HEK293 (cell line): ENCODE measurements at regions of chr1 and their contacts with region 1.

Region 1: DNA sequence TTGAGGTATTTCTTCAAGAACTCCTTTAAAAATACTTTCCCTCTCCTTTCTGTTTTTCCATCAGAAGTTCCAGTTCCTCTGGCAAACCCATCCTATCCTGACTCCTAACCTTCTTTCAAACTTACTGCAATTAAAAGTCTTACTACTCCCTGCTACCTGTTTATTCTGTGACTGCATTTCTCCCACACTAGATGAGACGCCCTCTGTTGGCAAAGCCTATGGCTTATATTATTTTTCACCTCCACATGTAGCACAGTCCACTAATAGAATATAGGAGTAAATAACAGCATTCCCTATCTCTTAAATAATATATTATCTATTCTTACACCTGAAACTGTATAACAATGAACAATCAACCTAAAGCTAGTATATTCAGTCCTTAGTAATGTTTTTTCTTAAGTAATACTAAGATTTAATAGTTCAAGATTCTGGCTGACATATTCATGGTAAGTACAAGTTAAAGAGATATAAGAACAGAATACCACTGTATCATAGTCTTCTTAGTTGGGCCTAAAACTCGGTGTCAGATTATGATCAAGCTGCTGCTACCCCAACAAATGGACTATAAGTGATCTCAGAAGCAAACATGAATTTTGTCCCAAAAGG is 54.8 kb downstream of the RAB3GAP2 start:
- H3K4me3 ChIP-seq: no peak overlapping the region
- H3K27ac ChIP-seq: no peak overlapping the region
- H3K4me1 ChIP-seq: peaks cover 9% of the 10 kb centered on the region; the same call in 1 of the 2 replicates
- CTCF ChIP-seq: no peak

Region 2: GRCh38 chr1:220189750-220190347 is 27.6 kb before region 1 on chr1:
- CTCF ChIA-PET with region 1: interaction called, 22 read pairs
- POLR2A ChIA-PET with region 1: interaction called, 3 read pairs
- H3K4me3 ChIP-seq: no peak overlapping the region
- H3K27ac ChIP-seq: no peak overlapping the region
- H3K4me1 ChIP-seq: no peaks in the 10 kb centered on the region
- CTCF ChIP-seq: no peak

Region 3: GRCh38 chr1:220207411-220207810 is 10.1 kb before region 1 on chr1:
- CTCF ChIA-PET with region 1: interaction called, 12 read pairs
- POLR2A ChIA-PET with region 1: no interaction called
- H3K4me3 ChIP-seq: no peak overlapping the region
- H3K27ac ChIP-seq: no peak overlapping the region
- H3K4me1 ChIP-seq: no peaks in the 10 kb centered on the region
- CTCF ChIP-seq: no peak

Region 4: GRCh38 chr1:220229771-220230170 is 12.3 kb after region 1 on chr1:
- CTCF ChIA-PET with region 1: interaction called, 20 read pairs
- POLR2A ChIA-PET with region 1: no interaction called
- H3K4me3 ChIP-seq: no peak overlapping the region
- H3K27ac ChIP-seq: no peak overlapping the region
- H3K4me1 ChIP-seq: no peaks in the 10 kb centered on the region
- CTCF ChIP-seq: no peak

Region 5: DNA sequence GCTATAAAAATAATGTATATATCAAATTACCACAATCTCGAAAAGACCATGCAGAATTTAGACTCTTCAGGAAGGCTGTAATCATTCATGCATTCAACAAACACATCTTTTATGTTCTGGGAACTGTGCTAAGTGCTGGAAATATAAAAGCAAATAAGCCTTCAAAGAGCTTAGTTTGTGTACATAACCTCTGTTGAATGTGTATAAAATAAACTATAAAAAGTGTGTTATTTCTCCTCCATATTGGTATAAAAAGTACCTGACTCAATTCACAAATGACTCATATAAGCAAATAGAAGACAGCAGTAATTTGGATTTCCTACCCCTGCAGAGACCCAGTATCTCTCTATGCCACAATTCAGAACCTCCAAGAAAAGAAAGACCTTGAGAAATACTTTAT is 18.0 kb after region 1 on chr1:
- CTCF ChIA-PET with region 1: interaction called, 20 read pairs
- POLR2A ChIA-PET with region 1: no interaction called
- H3K4me3 ChIP-seq: no peak overlapping the region
- H3K27ac ChIP-seq: no peak overlapping the region
- H3K4me1 ChIP-seq: peaks cover 7% of the 10 kb centered on the region; the same call in 1 of the 2 replicates
- CTCF ChIP-seq: no peak